ENCODE measurements at regions of chr17 and their contacts with region 1.

Region 1: DNA sequence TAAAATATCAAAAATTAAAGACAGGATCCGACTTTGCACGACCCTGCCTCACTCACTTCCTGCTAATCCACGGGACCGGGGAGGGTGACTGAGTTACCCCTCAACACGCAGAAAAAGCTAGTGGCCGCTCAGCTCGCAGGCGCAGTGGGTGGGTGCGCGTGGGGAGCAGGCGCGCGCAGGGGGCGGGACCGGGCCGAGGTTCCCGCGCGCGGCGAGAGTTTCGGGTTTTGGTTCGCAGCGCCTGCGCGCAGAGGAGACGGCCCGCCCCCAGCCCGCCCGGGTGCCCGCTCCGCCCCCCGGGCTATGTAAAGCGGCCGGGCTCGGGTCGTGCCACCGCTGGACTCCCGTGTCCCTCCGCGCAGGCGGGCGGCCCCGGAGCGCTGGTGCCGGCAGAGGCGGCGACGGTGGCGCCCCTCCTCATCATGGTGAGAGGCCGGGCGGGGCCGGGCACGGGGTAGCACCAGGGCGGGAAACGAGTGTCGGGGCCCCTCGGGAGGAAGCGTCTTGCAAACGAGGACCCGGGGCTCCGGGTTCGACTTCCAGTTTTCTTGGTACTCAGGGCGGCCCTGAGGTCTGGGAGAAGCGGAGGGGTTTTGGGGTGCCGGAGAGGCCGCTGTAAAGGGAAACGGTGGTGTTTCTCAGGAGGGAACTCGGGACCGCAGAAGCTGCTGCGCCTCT is at the start of gene CNP:
- DNase-seq: peak; percentile 79 to 96 (median 90)
- ATAC-seq: peak; percentile 80
- H3K4me3 ChIP-seq: peak within 1 kb of the TSS; percentile 91
- H3K4me3 Mint-ChIP-seq: peak within 1 kb of the TSS; percentile 85
- H3K27ac ChIP-seq: peak within 1 kb of the TSS; percentile 65 to 74
- H3K27ac Mint-ChIP-seq: peak within 1 kb of the TSS; percentile 94
- H3K4me1 ChIP-seq: peaks cover 41% of the 10 kb centered on the region
- H3K4me1 Mint-ChIP-seq: peaks cover 39% of the 10 kb centered on the region
- H3K27me3 ChIP-seq: no peaks in the 10 kb centered on the region
- H3K27me3 Mint-ChIP-seq: no peaks in the 10 kb centered on the region
- CTCF ChIP-seq: no peak
- total RNA-seq, gene CNP: 19.2 to 23.4 TPM

Region 2: GRCh38 chr17:41777574-41778188 is 188.9 kb before region 1 on chr17:
- CTCF ChIA-PET with region 1: no interaction called
- POLR2A ChIA-PET with region 1: no interaction called
- intact Hi-C with region 1: no loop called
- DNase-seq: no peak
- ATAC-seq: no peak
- H3K4me3 ChIP-seq: no peak overlapping the region
- H3K4me3 Mint-ChIP-seq: no peak overlapping the region
- H3K27ac ChIP-seq: no peak overlapping the region
- H3K27ac Mint-ChIP-seq: no peak overlapping the region
- H3K4me1 ChIP-seq: no peaks in the 10 kb centered on the region
- H3K4me1 Mint-ChIP-seq: no peaks in the 10 kb centered on the region
- H3K27me3 ChIP-seq: peaks cover 4 to 6% of the 10 kb centered on the region in 2 experiments
- H3K27me3 Mint-ChIP-seq: peaks cover 14% of the 10 kb centered on the region
- CTCF ChIP-seq: no peak

Region 3: GRCh38 chr17:41864836-41865595 is 101.6 kb before region 1 on chr17 and contains the start of gene KLHL11:
- CTCF ChIA-PET with region 1: interaction called, 5 read pairs
- POLR2A ChIA-PET with region 1: interaction called, 3 read pairs
- intact Hi-C with region 1: loop called in 1 of 2 experiments (anchors 5 kb)
- DNase-seq: peak; percentile 79 to 95 (median 84)
- ATAC-seq: peak; percentile 88
- H3K4me3 ChIP-seq: peak within 1 kb of the TSS; percentile 95
- H3K4me3 Mint-ChIP-seq: no peak within 1 kb of the TSS
- H3K27ac ChIP-seq: peak within 1 kb of the TSS; percentile 79 to 87
- H3K27ac Mint-ChIP-seq: no peak within 1 kb of the TSS
- H3K4me1 ChIP-seq: peaks cover 46% of the 10 kb centered on the region
- H3K4me1 Mint-ChIP-seq: peaks cover 20% of the 10 kb centered on the region
- H3K27me3 ChIP-seq: no peaks in the 10 kb centered on the region
- H3K27me3 Mint-ChIP-seq: no peaks in the 10 kb centered on the region
- CTCF ChIP-seq: no peak
- total RNA-seq, gene KLHL11: 32.9 to 34.0 TPM

Region 4: GRCh38 chr17:41930009-41930832 is 36.4 kb before region 1 on chr17 and contains the start of gene ODAD4:
- CTCF ChIA-PET with region 1: interaction called, 4 read pairs
- POLR2A ChIA-PET with region 1: interaction called, 19 read pairs
- intact Hi-C with region 1: no loop called
- DNase-seq: peak; percentile 93 to 99 (median 95)
- ATAC-seq: peak; percentile 99
- H3K4me3 ChIP-seq: peak within 1 kb of the TSS; percentile 68
- H3K4me3 Mint-ChIP-seq: peak within 1 kb of the TSS; percentile 91
- H3K27ac ChIP-seq: peak within 1 kb of the TSS; percentile 75 to 92
- H3K27ac Mint-ChIP-seq: peak within 1 kb of the TSS; percentile 89
- H3K4me1 ChIP-seq: peaks cover 23% of the 10 kb centered on the region
- H3K4me1 Mint-ChIP-seq: peaks cover 19% of the 10 kb centered on the region
- H3K27me3 ChIP-seq: no peaks in the 10 kb centered on the region
- H3K27me3 Mint-ChIP-seq: no peaks in the 10 kb centered on the region
- CTCF ChIP-seq: peak; percentile 42
- total RNA-seq, gene ODAD4: 2.2 to 2.7 TPM

Region 5: GRCh38 chr17:42112552-42113176 is 146.1 kb after region 1 on chr17 and contains the start of gene DHX58:
- CTCF ChIA-PET with region 1: interaction called, 3 read pairs
- POLR2A ChIA-PET with region 1: interaction called, 24 read pairs
- intact Hi-C with region 1: loop called (anchors 1 kb)
- DNase-seq: peak; percentile 65 to 93 (median 73)
- ATAC-seq: peak; percentile 79
- H3K4me3 ChIP-seq: peak within 1 kb of the TSS; percentile 58
- H3K4me3 Mint-ChIP-seq: peak within 1 kb of the TSS; percentile 92
- H3K27ac ChIP-seq: peak within 1 kb of the TSS; percentile 66 to 79
- H3K27ac Mint-ChIP-seq: peak within 1 kb of the TSS; percentile 87
- H3K4me1 ChIP-seq: peaks cover 48% of the 10 kb centered on the region
- H3K4me1 Mint-ChIP-seq: peaks cover 50% of the 10 kb centered on the region
- H3K27me3 ChIP-seq: no peaks in the 10 kb centered on the region
- H3K27me3 Mint-ChIP-seq: no peaks in the 10 kb centered on the region
- CTCF ChIP-seq: no peak
- total RNA-seq, gene DHX58: 33.5 to 35.6 TPM

Region 6: GRCh38 chr17:42153919-42154742 is 187.5 kb after region 1 on chr17:
- CTCF ChIA-PET with region 1: no interaction called
- POLR2A ChIA-PET with region 1: interaction called, 3 read pairs
- intact Hi-C with region 1: loop called in 1 of 2 experiments (anchors 2 kb)
- DNase-seq: peak in 3 of 14 experiments; percentile 4 to 48 (median 44)
- ATAC-seq: no peak
- H3K4me3 ChIP-seq: peak overlapping the region; percentile 84
- H3K4me3 Mint-ChIP-seq: peak overlapping the region; percentile 99
- H3K27ac ChIP-seq: peak overlapping the region; percentile 72 to 79
- H3K27ac Mint-ChIP-seq: peak overlapping the region; percentile 88
- H3K4me1 ChIP-seq: peaks cover 48% of the 10 kb centered on the region
- H3K4me1 Mint-ChIP-seq: peaks cover 32% of the 10 kb centered on the region
- H3K27me3 ChIP-seq: no peaks in the 10 kb centered on the region
- H3K27me3 Mint-ChIP-seq: no peaks in the 10 kb centered on the region
- CTCF ChIP-seq: no peak

Region 7: GRCh38 chr17:42212382-42212781 is 245.8 kb after region 1 on chr17:
- CTCF ChIA-PET with region 1: no interaction called
- POLR2A ChIA-PET with region 1: no interaction called
- intact Hi-C with region 1: no loop called
- DNase-seq: no peak
- ATAC-seq: no peak
- H3K4me3 ChIP-seq: no peak overlapping the region
- H3K4me3 Mint-ChIP-seq: no peak overlapping the region
- H3K27ac ChIP-seq: no peak overlapping the region
- H3K27ac Mint-ChIP-seq: no peak overlapping the region
- H3K4me1 ChIP-seq: no peaks in the 10 kb centered on the region
- H3K4me1 Mint-ChIP-seq: no peaks in the 10 kb centered on the region
- H3K27me3 ChIP-seq: no peaks in the 10 kb centered on the region
- H3K27me3 Mint-ChIP-seq: no peaks in the 10 kb centered on the region
- CTCF ChIP-seq: no peak